ENCODE measurements at regions of chr19 and their contacts with region 1.

Region 1: DNA sequence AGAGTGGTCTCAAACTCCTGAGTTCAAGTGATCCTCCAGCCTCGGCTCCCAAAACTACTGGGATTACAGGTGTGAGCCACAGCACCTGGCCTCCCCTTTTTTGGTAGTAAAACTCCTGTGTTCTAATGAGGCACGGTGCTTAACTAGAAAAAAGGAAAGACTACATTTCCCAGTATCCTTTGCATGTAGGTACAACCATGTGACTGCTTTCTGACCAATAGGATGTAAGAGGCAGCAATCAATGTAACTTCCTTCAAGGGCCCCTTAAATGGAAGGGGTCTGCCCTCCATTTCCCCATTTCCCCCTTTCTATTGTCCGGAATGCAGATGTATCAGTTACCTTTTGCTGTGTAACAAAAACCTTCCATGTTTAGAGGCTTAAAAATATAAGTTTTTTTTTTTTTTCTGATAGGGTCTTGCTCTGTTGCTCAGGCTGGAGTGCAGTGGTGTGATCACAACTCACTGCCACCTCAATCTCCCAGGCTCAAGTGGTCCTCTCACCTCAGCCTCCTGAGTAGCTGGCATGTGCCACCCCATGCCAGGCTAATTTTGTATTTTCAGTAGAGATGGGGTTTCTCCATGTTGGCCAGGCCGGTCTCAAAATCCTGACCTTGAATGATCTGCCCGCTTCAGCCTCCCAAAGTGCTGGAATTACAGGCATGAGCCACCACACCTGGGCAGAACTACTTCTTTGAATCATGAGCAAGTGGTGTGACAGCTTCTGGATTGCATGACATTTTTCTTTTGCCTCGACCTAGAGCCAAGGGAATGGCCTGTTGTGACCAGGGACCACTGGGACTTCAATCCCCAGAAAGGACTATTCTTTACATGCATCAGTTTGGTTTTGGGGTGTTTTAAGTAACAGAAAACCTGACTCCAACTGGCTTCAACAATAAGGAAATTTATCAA is 2.4 kb downstream of the GPR32 start:
- DNase-seq: peak in 1 of 2 experiments; percentile 13
- H3K4me3 ChIP-seq: no peak overlapping the region
- H3K4me3 Mint-ChIP-seq: no peak overlapping the region
- H3K27ac Mint-ChIP-seq: no peak overlapping the region
- H3K4me1 ChIP-seq: peaks cover 2% of the 10 kb centered on the region; the same call in 1 of the 2 replicates
- H3K4me1 Mint-ChIP-seq: no peaks in the 10 kb centered on the region
- H3K27me3 ChIP-seq: no peaks in the 10 kb centered on the region
- H3K27me3 Mint-ChIP-seq: peaks cover 11% of the 10 kb centered on the region
- CTCF ChIP-seq: no peak

Region 2: GRCh38 chr19:50739914-50740426 is 32.7 kb before region 1 on chr19:
- CTCF ChIA-PET with region 1: interaction called, 10 read pairs
- POLR2A ChIA-PET with region 1: no interaction called
- intact Hi-C with region 1: no loop called
- DNase-seq: no peak
- H3K4me3 ChIP-seq: no peak overlapping the region
- H3K4me3 Mint-ChIP-seq: no peak overlapping the region
- H3K27ac Mint-ChIP-seq: no peak overlapping the region
- H3K4me1 ChIP-seq: 0 out of 2 replicates have a peak, but pooled peaks cover 5% of the 10 kb centered on the region
- H3K4me1 Mint-ChIP-seq: no peaks in the 10 kb centered on the region
- H3K27me3 ChIP-seq: no peaks in the 10 kb centered on the region; the same call in 1 of the 2 replicates
- H3K27me3 Mint-ChIP-seq: peaks cover 17% of the 10 kb centered on the region
- CTCF ChIP-seq: no peak

Region 3: DNA sequence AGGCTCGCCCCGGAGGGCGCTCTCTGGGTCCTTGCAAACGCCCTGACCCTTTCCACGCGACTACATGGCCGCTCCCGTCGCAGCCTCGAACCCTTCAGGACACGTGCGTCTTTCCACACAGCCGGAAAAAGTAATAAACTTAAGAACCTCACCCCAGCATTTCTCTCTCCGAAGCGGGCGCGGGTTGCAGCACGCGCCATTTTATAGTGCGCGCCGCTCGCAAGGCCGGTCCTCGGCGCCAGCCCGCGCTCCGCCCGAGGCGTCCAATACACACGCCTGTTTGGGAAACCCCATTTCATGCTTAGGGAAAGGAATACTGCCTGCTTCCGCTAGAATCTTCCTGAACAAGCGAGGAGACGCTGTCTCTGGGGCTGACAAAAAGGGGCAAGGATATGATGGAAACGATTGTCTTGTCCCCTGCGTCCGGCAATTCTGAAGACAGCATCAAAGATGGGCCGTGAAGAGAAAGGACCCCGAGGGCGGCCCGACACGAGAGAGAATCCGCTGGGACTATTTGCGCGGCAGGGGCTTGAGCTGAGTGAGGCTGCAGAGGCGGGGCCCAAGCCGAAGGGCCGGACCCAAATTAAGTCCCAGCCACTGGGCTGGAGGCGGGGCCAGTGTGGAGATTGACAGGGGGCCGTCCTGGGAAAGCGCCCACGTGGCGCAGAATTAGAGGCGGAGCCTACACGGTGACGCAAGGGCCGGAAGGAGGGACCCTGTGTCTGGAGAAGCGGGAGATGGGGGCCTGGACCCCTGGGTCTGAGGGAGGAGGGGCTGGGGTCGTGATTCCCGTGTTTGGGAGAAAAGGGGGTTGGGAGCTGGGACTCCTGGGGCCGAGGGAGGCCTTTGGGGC is 32.0 kb after region 1 on chr19:
- CTCF ChIA-PET with region 1: no interaction called
- POLR2A ChIA-PET with region 1: no interaction called
- intact Hi-C with region 1: no loop called
- DNase-seq: peak; percentile 99
- H3K4me3 ChIP-seq: peak overlapping the region; percentile 62
- H3K4me3 Mint-ChIP-seq: peak overlapping the region; percentile 93
- H3K27ac Mint-ChIP-seq: peak overlapping the region; percentile 99
- H3K4me1 ChIP-seq: peaks cover 10% of the 10 kb centered on the region; the same call in 1 of the 2 replicates
- H3K4me1 Mint-ChIP-seq: peaks cover 12% of the 10 kb centered on the region
- H3K27me3 ChIP-seq: no peaks in the 10 kb centered on the region
- H3K27me3 Mint-ChIP-seq: no peaks in the 10 kb centered on the region
- CTCF ChIP-seq: no peak

Measured in Caco-2 (cell line).